ENCODE measurements at regions of chr21 and their contacts with region 1.

Region 1: DNA sequence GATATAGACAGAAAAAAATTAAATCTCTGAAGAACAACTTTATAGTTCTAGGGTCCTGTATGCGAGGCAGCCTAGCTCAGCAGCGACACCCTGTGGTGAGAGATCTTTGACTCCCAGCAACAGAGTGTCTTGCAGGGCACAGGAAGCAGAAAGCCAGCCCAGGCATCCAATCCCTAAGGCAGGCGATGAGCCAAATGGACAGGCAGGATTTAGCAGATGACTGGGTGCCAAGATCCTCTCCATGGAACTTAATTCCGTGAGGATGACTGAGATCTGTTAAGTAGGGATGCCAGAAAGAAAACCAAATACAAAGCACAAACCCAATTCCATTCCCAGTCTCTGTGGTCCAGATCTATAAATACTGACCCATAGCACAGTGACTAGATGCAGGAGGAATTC is 38.8 kb downstream of the HLCS start:
- DNase-seq: peak; percentile 67
- H3K4me3 ChIP-seq: no peak overlapping the region
- H3K27me3 ChIP-seq: no peaks in the 10 kb centered on the region
- CTCF ChIP-seq: peak; percentile 90

Region 2: GRCh38 chr21:36504067-36505058 is 423.4 kb before region 1 on chr21:
- CTCF ChIA-PET with region 1: interaction called, 15 read pairs
- POLR2A ChIA-PET with region 1: no interaction called
- DNase-seq: no peak
- H3K4me3 ChIP-seq: no peak overlapping the region
- H3K27me3 ChIP-seq: peaks cover 10% of the 10 kb centered on the region
- CTCF ChIP-seq: peak; percentile 78